HepG2 (cell line): ENCODE measurements at regions of chr1 and their contacts with region 1.

Region 1: DNA sequence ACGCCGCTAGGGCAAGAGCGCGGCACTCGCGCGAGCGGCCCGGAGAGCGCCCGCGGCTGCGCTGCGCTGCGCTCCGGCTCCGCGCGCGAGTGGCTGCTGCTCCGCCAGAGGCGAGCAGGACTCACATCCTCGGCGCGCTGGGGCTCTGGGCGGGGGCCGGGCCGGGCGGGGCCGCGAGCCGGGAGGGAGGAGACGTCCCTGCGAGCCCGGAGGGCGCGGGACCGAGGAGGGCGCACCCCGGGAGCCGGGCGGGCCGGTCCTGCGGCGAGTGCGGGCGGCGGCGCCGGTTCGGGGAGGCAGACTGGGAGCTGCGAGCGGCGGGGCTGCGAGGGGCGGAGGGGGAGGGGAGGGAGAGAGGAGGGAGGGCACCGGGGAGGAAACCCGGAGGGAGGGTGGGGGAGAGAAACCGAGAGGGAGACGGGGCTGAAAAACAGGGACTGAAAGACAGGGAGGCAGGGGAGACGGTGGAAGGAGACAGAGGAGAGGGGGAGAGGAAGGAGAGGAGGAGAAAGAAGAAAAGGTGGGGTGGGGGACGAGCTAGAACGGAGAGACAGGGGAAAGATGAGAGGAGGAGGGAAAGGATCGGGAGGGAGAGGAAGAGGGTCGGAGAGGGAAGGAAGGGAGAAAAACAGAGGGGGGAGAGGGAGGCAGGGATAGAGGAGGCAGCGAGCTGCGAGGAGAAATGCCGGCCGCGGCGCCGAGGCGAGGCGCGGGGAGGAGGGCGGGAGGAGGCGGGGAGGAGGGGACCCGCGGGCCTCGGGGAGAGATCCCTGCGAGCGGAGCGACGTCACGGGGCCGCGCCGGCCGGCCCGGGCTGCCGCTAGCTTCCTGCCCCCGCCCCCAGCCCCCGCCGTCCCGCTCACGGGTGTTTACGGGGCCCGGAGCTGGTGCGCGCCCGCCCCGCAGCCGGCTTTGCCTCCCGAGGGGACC is at the start of gene CAMK2N1:
- DNase-seq: peak; percentile 55
- ATAC-seq: peak; percentile 59
- H3K4me3 ChIP-seq: peak within 1 kb of the TSS; percentile 90 to 95 (median 92)
- H3K27ac ChIP-seq: peak within 1 kb of the TSS; percentile 98
- H3K4me1 ChIP-seq: peaks cover 51% of the 10 kb centered on the region
- H3K27me3 ChIP-seq: no peaks in the 10 kb centered on the region
- CTCF ChIP-seq: no peak
- EP300 ChIP-seq: no peak
- POLR2A ChIP-seq: no peak; a peak in 1 of 4 replicates
- RAD21 ChIP-seq: no peak
- total RNA-seq, gene CAMK2N1: 38.6 and 44.3 TPM in 2 replicates

Region 2: GRCh38 chr1:20322081-20322824 is 163.5 kb before region 1 on chr1:
- CTCF ChIA-PET with region 1: no interaction called
- POLR2A ChIA-PET with region 1: no interaction called
- in situ Hi-C with region 1: no loop called
- intact Hi-C with region 1: no loop called
- DNase-seq: no peak
- ATAC-seq: no peak
- H3K4me3 ChIP-seq: no peak overlapping the region
- H3K27ac ChIP-seq: no peak overlapping the region
- H3K4me1 ChIP-seq: no peaks in the 10 kb centered on the region
- H3K27me3 ChIP-seq: peaks cover 11 to 74% of the 10 kb centered on the region in 2 experiments
- CTCF ChIP-seq: no peak
- EP300 ChIP-seq: no peak
- POLR2A ChIP-seq: no peak
- RAD21 ChIP-seq: no peak

Region 3: GRCh38 chr1:20440785-20441200 is 45.0 kb before region 1 on chr1:
- CTCF ChIA-PET with region 1: no interaction called
- POLR2A ChIA-PET with region 1: interaction called, 3 read pairs
- in situ Hi-C with region 1: loop called (anchors 10 kb)
- intact Hi-C with region 1: loop called (anchors 5 kb)
- DNase-seq: peak; percentile 58
- ATAC-seq: peak; percentile 85
- H3K4me3 ChIP-seq: no peak overlapping the region
- H3K27ac ChIP-seq: no peak overlapping the region
- H3K4me1 ChIP-seq: peaks cover 28% of the 10 kb centered on the region
- H3K27me3 ChIP-seq: peaks cover 0 to 1% of the 10 kb centered on the region in 2 experiments; a peak in 1 of 5 replicates
- CTCF ChIP-seq: no peak
- EP300 ChIP-seq: no peak
- POLR2A ChIP-seq: no peak
- RAD21 ChIP-seq: no peak

Region 4: DNA sequence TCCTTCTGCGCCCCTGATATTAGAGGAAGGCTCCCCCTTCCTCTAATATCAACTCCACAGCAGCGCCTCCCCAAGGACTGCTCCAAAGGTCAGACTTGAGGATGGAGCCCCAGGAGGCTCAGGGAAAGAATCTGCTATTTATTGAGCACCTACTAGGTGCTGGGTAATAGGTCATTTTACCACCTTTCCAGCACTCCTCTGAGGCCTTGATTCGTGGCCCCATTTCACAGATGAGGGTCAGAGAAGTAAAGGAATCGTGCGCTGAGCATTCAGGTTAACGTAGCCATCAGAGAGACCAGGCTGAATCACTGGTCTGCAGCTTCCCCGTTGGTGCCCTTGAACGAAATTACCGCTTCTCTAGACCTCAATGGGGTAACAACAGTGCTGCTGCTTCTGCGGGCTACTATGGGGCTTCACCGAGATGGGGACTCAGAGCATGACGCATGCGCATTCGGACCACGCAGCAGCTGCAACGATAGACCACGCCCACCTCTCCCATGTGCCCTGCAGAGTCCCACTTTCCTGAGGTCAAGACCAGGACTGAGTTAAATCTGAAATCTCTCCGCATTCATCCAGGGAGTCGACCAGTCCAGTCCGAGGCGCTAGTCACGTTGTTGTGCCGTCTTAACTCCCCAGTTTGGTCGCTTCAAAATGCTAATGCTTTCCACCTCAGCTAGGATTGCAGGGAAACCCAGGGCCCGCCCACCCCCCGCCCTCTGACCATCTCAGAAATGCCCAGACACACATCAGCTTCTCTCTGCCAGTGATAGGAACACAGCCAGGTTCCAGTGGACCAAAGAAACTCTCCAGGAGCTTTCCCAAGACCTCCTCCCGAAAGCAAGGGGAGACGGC is 12.7 kb before region 1 on chr1:
- CTCF ChIA-PET with region 1: interaction called, 73 read pairs
- POLR2A ChIA-PET with region 1: interaction called, 60 read pairs
- in situ Hi-C with region 1: no loop called
- intact Hi-C with region 1: loop called (anchors 1 kb)
- DNase-seq: no peak
- ATAC-seq: no peak
- H3K4me3 ChIP-seq: no peak overlapping the region
- H3K27ac ChIP-seq: no peak overlapping the region
- H3K4me1 ChIP-seq: peaks cover 63% of the 10 kb centered on the region
- H3K27me3 ChIP-seq: peaks cover 2 to 4% of the 10 kb centered on the region in 2 experiments; a peak in 2 of 5 replicates
- CTCF ChIP-seq: no peak
- EP300 ChIP-seq: no peak
- POLR2A ChIP-seq: no peak
- RAD21 ChIP-seq: no peak

Region 5: DNA sequence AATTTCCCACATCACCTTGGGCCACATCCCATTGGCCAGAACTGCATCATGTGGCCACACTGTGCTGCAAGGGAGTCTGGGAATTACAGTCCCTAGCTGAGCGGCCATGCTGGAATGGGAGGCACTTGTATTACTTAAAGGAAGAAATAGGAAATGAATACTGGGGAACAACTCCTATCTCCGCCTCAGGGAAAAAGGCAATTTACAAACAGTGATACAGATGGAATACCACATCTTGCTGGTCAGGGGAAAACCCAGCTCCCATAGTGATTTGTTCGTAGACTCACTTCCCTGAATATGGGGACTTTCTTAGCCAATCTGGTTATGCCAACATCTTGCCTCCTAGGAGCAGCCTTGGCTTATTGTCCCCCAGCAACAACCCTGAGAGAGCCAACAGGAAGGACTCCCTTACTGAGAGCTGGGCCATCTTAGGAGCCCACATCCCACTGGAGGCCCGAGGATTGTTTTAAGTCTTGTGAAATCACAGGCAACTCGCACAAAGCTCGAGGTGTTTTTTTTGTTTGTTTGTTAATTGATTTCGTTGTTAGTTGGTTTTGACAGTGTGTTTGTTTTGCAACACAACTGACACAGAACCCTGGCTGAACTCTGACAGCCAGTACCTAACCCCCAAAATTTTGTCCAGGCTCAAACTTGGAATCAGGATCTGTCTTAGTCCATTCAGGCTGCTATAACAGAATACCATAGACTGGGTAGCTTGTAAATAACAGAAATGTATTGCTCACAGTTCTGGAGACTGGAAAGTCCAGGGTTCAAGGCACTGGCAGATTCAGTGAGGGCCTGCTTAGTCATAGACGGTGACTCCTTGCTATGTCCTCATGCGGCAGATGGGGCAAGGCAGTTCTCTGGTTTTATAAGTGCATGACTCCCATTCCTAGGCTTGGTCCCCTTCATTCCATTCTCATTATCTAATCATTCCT is 118.0 kb after region 1 on chr1:
- CTCF ChIA-PET with region 1: no interaction called
- POLR2A ChIA-PET with region 1: no interaction called
- in situ Hi-C with region 1: no loop called
- intact Hi-C with region 1: no loop called
- DNase-seq: peak; percentile 40
- ATAC-seq: peak; percentile 48
- H3K4me3 ChIP-seq: no peak overlapping the region
- H3K27ac ChIP-seq: no peak overlapping the region
- H3K4me1 ChIP-seq: peaks cover 32% of the 10 kb centered on the region
- H3K27me3 ChIP-seq: no peaks in the 10 kb centered on the region
- CTCF ChIP-seq: no peak
- EP300 ChIP-seq: no peak
- POLR2A ChIP-seq: no peak
- RAD21 ChIP-seq: no peak

Region 6: GRCh38 chr1:20725189-20725872 is 239.5 kb after region 1 on chr1:
- CTCF ChIA-PET with region 1: no interaction called
- POLR2A ChIA-PET with region 1: no interaction called
- in situ Hi-C with region 1: no loop called
- intact Hi-C with region 1: no loop called
- DNase-seq: no peak
- ATAC-seq: no peak
- H3K4me3 ChIP-seq: no peak overlapping the region
- H3K27ac ChIP-seq: no peak overlapping the region
- H3K4me1 ChIP-seq: peaks cover 23% of the 10 kb centered on the region
- H3K27me3 ChIP-seq: peaks cover 3 to 6% of the 10 kb centered on the region in 2 experiments; a peak in 3 of 5 replicates
- CTCF ChIP-seq: no peak
- EP300 ChIP-seq: no peak
- POLR2A ChIP-seq: no peak
- RAD21 ChIP-seq: no peak